Gastrocnemius medialis (tissue), 4 donors: ENCODE measurements at regions of chr17 and their contacts with region 1.

Region 1: DNA sequence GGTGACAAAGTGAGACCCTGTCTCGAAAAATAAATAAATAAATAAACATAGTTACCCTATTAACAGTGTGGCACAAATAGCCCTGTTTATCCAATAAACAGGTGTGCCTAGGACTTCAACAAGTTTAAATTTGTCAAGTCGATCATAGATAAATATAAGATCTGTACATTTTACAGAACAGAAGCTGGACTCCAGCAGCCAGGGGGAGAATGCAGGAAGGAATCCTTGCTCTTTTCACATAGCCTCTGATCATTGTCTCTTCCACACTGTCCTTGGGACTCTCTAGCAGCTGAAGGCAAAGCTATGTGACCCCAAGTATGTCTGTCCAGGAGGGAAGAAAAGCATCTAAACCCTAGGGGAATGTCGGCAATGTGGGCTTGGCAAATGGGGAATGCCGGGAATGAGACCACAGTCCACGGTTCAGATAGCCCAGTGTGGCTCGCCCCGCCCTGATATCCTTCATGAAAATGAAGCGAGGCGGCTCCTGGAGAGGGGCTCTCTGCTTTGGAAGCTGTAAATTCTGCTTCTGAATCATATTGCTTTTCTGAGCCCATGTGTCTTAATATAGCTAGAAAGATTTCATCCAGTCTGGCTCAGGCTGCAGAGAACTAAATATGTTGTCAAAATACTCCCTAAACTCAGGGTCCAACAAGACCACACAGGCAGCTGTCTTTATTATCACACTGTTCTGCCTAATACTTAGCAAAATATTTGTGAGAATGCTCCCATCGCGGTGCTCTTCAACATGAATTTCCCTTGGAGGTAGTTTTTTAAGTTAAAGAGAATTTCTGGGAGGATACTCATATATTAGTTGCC is 24.9 kb upstream of the GRB2 start:
- DNase-seq: no peak
- ATAC-seq: peak in 1 of 2 donors; percentile 47
- H3K4me3 ChIP-seq: no peak overlapping the region
- H3K27ac ChIP-seq: peak overlapping the region in 3 of 4 donors; percentile 22 to 53 (median 35)
- H3K4me1 ChIP-seq: peaks cover 12 to 21% of the 10 kb centered on the region in 2 donors
- H3K27me3 ChIP-seq: no peaks in the 10 kb centered on the region
- CTCF ChIP-seq: no peak
- POLR2A ChIP-seq: no peak

Region 2: DNA sequence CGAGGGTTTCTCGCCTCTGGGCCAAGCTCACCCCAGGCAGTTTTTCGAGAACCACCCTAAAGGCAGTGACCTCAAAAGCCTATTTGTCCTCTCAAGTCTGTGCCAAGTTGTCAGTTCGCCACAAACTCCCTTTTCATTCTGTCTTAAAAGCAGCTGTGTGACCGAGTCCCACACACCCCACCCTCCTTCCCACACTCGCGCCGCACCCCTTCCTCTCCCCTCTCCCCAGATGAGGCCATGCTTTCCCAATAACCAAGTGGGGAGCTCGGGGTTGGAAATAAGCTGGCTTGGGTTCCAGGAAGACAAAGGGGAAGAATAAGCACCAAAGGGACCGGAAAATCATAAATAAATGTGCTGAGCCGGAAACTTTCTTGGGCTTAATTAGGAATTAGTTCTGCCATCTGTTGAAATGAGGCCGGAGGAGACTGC is 607.4 kb before region 1 on chr17:
- in situ Hi-C with region 1: no loop called
- intact Hi-C with region 1: no loop called
- DNase-seq: peak in 1 of 2 donors; percentile 22
- ATAC-seq: peak in 1 of 2 donors; percentile 6
- H3K4me3 ChIP-seq: no peak overlapping the region
- H3K27ac ChIP-seq: no peak overlapping the region
- H3K4me1 ChIP-seq: no peaks in the 10 kb centered on the region
- H3K27me3 ChIP-seq: no peaks in the 10 kb centered on the region
- CTCF ChIP-seq: no peak
- POLR2A ChIP-seq: no peak

Region 3: DNA sequence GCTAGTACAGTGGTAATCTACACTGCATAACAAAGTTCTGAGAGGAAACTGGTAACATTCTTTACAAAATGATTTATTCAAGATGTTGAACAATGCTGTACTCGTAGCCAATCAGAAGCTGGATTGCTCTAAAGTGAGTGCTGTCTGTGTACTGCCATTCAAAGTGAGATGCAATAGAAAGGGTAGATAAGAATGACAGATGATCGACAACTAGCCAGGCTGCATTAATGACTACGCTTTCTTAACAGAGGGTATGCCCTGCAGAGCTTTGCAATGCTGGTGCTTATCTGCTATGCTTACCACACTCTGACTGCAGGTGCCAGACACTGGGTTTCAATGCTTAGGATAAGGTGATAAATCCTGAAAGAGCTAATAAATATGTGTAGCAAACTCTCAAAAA is 95.1 kb before region 1 on chr17:
- in situ Hi-C with region 1: no loop called
- intact Hi-C with region 1: no loop called
- DNase-seq: no peak
- ATAC-seq: no peak
- H3K4me3 ChIP-seq: no peak overlapping the region
- H3K27ac ChIP-seq: no peak overlapping the region
- H3K4me1 ChIP-seq: peaks cover 0 to 17% of the 10 kb centered on the region in 2 donors
- H3K27me3 ChIP-seq: no peaks in the 10 kb centered on the region
- CTCF ChIP-seq: no peak
- POLR2A ChIP-seq: no peak

Region 4: DNA sequence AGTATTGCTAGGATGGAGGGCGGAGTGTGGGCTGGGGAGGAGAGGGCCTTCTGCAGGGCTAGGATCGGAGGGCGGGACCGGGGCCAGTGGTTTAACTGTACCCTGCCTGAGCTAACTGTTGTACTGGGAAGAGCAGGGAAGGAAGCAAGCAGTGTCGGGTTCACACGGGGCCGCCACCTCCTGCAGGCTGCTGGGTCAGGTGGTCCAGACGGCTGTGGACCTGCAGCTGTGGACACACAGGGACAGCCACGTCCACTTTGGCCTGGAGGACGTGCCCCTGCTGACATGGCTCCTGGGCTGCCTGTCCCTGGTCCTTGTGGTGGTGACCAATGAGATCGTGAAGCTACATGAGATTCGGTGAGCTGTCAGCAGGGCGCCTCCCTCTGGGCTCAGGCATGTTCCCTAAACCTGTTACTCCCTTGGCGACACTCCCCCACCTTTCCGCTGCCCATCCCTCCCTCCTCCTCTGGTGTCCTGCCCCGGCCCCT is 68.4 kb after region 1 on chr17:
- in situ Hi-C with region 1: loop called in 1 of 4 experiments (anchors 10 kb)
- intact Hi-C with region 1: no loop called
- DNase-seq: peak in 1 of 2 donors; percentile 58
- ATAC-seq: peak in 1 of 2 donors; percentile 54
- H3K4me3 ChIP-seq: no peak overlapping the region
- H3K27ac ChIP-seq: peak overlapping the region; percentile 18 to 67 (median 30)
- H3K4me1 ChIP-seq: peaks cover 4 to 9% of the 10 kb centered on the region in 2 donors
- H3K27me3 ChIP-seq: no peaks in the 10 kb centered on the region
- CTCF ChIP-seq: peak in 1 of 5 experiments; percentile 18
- POLR2A ChIP-seq: no peak

Region 5: GRCh38 chr17:75524953-75525719 is 94.8 kb after region 1 on chr17 and contains the start of gene LLGL2:
- in situ Hi-C with region 1: no loop called
- intact Hi-C with region 1: loop called (anchors 2 kb)
- DNase-seq: peak in 1 of 2 donors; percentile 48
- ATAC-seq: peak; percentile 79 to 84
- H3K4me3 ChIP-seq: peak within 1 kb of the TSS; percentile 64 to 95 (median 70)
- H3K27ac ChIP-seq: peak within 1 kb of the TSS; percentile 31 to 59 (median 48)
- H3K4me1 ChIP-seq: peaks cover 5 to 9% of the 10 kb centered on the region in 2 donors
- H3K27me3 ChIP-seq: peaks cover 8 to 17% (median 12%) of the 10 kb centered on the region in 3 donors
- CTCF ChIP-seq: peak in 4 of 5 experiments; percentile 41 to 63 (median 52)
- POLR2A ChIP-seq: peak in 1 of 2 donors; percentile 46
- total RNA-seq, gene LLGL2: 0.78 to 7.1 (median 1.4) TPM

Region 6: DNA sequence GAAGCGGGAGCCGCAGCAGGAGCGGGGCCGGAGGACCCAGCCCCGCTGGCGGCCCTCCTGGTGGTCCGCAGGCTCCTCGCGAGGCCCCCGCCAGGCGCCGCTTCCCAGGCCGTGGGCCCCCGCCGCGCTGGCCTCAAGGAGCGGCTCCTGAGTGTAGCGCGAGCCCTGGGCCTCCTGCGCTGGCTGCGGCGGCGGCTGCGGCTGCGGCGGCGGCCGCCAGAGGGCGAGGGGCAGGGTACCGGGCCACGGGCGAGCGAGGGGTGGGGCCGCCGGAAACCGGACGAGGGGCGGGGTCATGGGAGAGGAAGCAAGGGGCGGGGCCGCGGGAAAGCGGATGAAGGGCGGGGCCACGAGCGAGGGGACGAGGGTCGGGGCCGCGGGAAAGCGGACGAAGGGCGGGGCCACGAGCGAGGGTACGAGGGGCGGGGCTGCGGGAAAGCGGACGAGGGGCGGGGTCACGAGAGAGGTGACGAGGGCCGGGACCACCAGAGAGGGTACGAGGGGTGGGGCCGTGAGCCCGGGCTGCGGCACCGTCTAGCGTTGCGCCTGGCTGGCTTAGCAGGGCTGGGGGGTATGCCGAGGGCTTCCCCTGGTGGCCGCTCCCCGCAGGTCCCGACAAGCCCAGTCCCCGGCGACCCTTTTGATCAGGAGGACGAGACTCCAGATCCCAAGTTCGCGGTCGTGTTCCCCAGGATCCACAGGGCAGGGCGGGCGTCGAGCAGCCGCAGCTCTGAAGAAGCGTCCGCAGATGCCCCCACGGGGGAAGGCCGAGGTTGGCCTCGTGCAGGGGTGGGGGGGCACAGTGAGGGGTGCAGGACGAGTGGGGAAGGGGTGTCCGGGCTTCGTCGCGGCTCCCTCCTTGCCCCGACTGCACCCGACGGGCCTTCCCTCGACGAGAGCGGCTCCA is 158.9 kb after region 1 on chr17:
- in situ Hi-C with region 1: loop called in 1 of 4 experiments (anchors 25 kb)
- intact Hi-C with region 1: loop called (anchors 1 kb)
- DNase-seq: peak; percentile 88 to 89
- ATAC-seq: peak; percentile 87 to 88
- H3K4me3 ChIP-seq: peak overlapping the region; percentile 50 to 70 (median 66)
- H3K27ac ChIP-seq: peak overlapping the region; percentile 67 to 85 (median 79)
- H3K4me1 ChIP-seq: peaks cover 0 to 3% of the 10 kb centered on the region in 2 donors
- H3K27me3 ChIP-seq: peaks cover 18 to 20% (median 19%) of the 10 kb centered on the region in 3 donors
- CTCF ChIP-seq: peak in 4 of 5 experiments; percentile 75 to 97 (median 86)
- POLR2A ChIP-seq: peak; percentile 52